CD8-positive, alpha-beta T cell (primary cell): ENCODE measurements at regions of chr16 and their contacts with region 1.

Region 1: GRCh38 chr16:47826070-47826469 is 329.7 kb downstream of the ABCC12 start:
- DNase-seq: no peak
- ATAC-seq: no peak
- H3K4me3 ChIP-seq: no peak overlapping the region
- H3K4me3 Mint-ChIP-seq: no peak overlapping the region
- H3K27ac ChIP-seq: no peak overlapping the region
- H3K27ac Mint-ChIP-seq: no peak overlapping the region
- H3K4me1 ChIP-seq: no peaks in the 10 kb centered on the region
- H3K4me1 Mint-ChIP-seq: no peaks in the 10 kb centered on the region
- H3K27me3 ChIP-seq: no peaks in the 10 kb centered on the region
- H3K27me3 Mint-ChIP-seq: no peaks in the 10 kb centered on the region
- CTCF ChIP-seq: no peak

Region 2: DNA sequence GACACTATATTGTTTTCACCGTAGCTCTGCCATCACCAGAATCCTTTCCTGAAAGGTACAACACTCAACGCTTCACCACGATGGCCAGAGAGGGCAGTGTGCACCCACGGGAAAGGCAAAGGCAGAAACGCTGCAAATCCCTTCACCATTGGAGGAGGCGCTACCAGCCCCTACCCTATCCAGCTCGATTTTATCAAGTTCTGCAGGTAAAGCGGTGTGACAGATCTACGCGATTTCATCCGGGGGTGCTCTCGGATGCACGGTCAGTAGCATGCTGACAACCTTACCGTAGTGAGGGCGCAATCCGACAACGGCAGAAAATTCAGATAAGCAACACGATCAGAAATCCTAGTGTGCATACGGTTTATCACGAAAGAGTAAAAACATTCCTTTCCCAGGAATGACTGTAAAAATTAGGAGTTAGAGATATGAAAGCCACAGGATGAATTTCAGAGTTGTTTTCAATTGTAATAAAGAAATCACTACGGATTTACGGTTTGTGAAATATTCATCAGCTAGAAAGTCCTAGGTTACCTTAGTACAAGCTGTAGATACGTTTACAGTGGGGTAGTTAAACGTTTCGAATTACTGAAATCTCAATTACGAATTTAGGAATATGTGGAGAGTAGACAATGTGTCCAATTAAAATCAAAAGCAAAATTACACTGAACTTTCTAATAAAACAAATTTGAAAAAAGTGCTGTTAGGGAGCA is 684.1 kb before region 1 on chr16:
- CTCF ChIA-PET with region 1: no interaction called
- POLR2A ChIA-PET with region 1: no interaction called
- intact Hi-C with region 1: no loop called
- DNase-seq: peak; percentile 63 to 87 (median 80)
- ATAC-seq: peak; percentile 77
- H3K4me3 ChIP-seq: peak overlapping the region; percentile 3 to 28
- H3K4me3 Mint-ChIP-seq: peak overlapping the region; percentile 76
- H3K27ac ChIP-seq: no peak overlapping the region
- H3K27ac Mint-ChIP-seq: no peak overlapping the region
- H3K4me1 ChIP-seq: peaks cover 12% of the 10 kb centered on the region
- H3K4me1 Mint-ChIP-seq: peaks cover 21% of the 10 kb centered on the region
- H3K27me3 ChIP-seq: peaks cover 3 to 5% of the 10 kb centered on the region in 2 experiments
- H3K27me3 Mint-ChIP-seq: peaks cover 22% of the 10 kb centered on the region
- CTCF ChIP-seq: peak; percentile 85

Region 3: GRCh38 chr16:47787696-47788095 is 38.4 kb before region 1 on chr16:
- CTCF ChIA-PET with region 1: no interaction called
- POLR2A ChIA-PET with region 1: no interaction called
- intact Hi-C with region 1: loop called in 1 of 2 experiments (anchors 1 kb)
- DNase-seq: no peak
- ATAC-seq: no peak
- H3K4me3 ChIP-seq: no peak overlapping the region
- H3K4me3 Mint-ChIP-seq: no peak overlapping the region
- H3K27ac ChIP-seq: no peak overlapping the region
- H3K27ac Mint-ChIP-seq: no peak overlapping the region
- H3K4me1 ChIP-seq: no peaks in the 10 kb centered on the region
- H3K4me1 Mint-ChIP-seq: no peaks in the 10 kb centered on the region
- H3K27me3 ChIP-seq: no peaks in the 10 kb centered on the region
- H3K27me3 Mint-ChIP-seq: peaks cover 3% of the 10 kb centered on the region
- CTCF ChIP-seq: no peak

Region 4: GRCh38 chr16:47873434-47873833 is 47.4 kb after region 1 on chr16:
- CTCF ChIA-PET with region 1: no interaction called
- POLR2A ChIA-PET with region 1: no interaction called
- intact Hi-C with region 1: no loop called
- DNase-seq: no peak
- ATAC-seq: no peak
- H3K4me3 ChIP-seq: no peak overlapping the region
- H3K4me3 Mint-ChIP-seq: no peak overlapping the region
- H3K27ac ChIP-seq: no peak overlapping the region
- H3K27ac Mint-ChIP-seq: no peak overlapping the region
- H3K4me1 ChIP-seq: no peaks in the 10 kb centered on the region
- H3K4me1 Mint-ChIP-seq: no peaks in the 10 kb centered on the region
- H3K27me3 ChIP-seq: no peaks in the 10 kb centered on the region
- H3K27me3 Mint-ChIP-seq: peaks cover 4% of the 10 kb centered on the region
- CTCF ChIP-seq: no peak